ENCODE measurements at regions of chr11 and their contacts with region 1.

Region 1: GRCh38 chr11:4539603-4540219 is 5.3 kb upstream of the OR52M1 start:
- DNase-seq: peak; percentile 57
- ATAC-seq: peak; percentile 69
- H3K4me3 Mint-ChIP-seq: no peak overlapping the region
- H3K27ac Mint-ChIP-seq: no peak overlapping the region
- H3K4me1 Mint-ChIP-seq: no peaks in the 10 kb centered on the region
- H3K27me3 Mint-ChIP-seq: peaks cover 9% of the 10 kb centered on the region

Region 2: DNA sequence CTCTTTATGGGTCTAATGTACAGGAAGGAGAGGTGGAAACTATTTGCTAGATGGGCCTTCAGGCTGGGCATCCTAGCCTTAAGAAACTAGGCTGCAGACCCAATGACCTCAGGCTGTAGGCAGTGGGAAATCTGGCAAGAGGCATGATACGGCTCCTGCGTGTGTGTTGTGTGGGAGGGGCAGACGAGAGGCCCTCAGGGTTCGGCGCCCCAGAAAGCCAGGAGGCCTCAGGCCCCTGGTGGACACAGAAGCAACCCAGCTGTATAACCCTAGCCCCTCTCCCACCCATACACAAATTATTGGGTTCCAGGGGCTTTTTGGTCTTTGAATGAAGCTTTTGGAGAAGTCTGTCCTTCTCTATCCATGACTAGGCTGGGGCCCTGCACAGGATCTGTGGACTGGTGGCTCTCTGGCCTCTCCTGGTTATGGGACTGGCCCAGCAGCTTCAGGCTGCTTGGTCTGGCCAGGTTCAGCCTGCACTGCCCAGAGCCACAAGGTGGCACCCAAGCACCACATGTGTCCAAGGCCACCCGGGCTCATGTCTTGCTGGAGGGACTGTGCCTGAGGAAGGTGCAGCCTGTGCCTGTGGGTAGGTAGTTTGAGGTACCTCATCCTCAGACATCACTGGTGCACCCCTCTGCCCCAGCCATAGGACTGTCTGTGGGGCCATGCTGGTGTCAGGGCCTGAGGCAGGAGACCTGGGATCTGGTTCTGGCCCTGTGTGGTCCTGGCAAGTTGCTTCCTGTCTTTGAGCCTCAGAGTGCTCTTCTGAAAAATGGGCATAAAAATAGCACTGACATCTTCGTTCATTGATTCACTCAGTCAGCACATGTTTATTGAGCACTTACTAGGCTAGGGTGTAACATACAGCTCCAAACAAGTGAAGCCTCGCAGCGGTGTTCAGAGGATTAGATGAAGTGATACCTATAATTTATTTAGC is 357.7 kb before region 1 on chr11:
- CTCF ChIA-PET with region 1: interaction called, 61 read pairs
- DNase-seq: peak; percentile 68
- ATAC-seq: peak; percentile 68
- H3K4me3 Mint-ChIP-seq: no peak overlapping the region
- H3K27ac Mint-ChIP-seq: no peak overlapping the region
- H3K4me1 Mint-ChIP-seq: peaks cover 14% of the 10 kb centered on the region
- H3K27me3 Mint-ChIP-seq: peaks cover 7% of the 10 kb centered on the region

Measured in activated CD8-positive, alpha-beta memory T cell treated with anti-CD3 and anti-CD28 coated beads, Interleukin-2, amount 10 ng/mL, durations not matched to agents 7 days and 5 days (primary cell).